ENCODE measurements at regions of chr2 and their contacts with region 1.

Region 1: DNA sequence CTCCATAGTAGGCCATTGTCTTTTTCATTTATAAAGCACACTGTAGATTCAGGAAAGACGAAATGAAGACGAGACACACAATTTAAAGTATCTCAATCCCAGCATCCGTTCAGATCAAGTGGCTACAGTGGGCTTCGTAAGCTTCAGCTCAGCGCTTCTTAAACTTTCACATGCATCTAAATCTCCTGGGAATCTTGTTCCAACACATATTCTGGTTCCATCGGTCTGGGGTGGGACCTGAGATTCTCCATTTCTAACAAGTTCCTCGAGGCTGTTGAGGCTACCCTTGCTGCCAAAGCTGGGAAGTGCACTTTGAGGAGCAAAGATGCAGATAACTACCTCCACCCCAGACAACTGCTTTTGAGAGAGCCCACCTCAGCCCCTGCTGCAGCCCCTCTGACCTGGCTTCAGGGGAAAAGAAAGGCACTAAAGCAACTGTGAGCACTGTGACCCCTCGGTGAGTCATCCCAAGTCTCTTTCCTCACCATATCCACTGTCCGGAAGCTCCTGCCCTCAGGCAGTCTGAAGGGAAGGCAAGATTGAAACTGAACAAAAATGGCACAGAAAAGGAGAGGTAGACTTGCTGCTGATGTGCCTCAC is 201.1 kb upstream of the FBXO11 start:
- DNase-seq: no peak
- H3K4me3 ChIP-seq: no peak overlapping the region
- H3K27ac ChIP-seq: peak overlapping the region in 5 of 8 donors; percentile 6 to 66 (median 53)
- H3K4me1 ChIP-seq: peaks cover 9 to 46% (median 26%) of the 10 kb centered on the region in 6 donors
- H3K27me3 ChIP-seq: no peaks in the 10 kb centered on the region
- CTCF ChIP-seq: no peak
- POLR2A ChIP-seq: no peak

Region 2: DNA sequence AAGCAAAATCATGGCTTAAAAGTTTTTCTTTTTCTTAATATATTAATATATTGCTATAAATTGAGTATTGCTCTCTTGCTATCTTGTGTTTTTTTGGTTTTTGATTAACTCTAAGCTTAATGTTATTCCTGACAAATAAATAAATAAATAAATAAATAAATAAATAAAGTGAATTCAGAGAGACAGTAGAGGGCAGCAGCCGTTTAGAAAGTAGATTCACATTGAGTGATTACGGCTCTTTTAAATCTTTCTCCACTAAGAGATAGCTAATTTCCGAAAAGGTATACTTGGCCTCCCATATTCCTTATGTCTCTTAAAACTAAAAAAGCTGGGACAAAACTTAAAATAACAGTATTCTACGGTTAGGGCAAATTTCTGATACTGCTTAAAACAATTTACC is 670.1 kb before region 1 on chr2:
- intact Hi-C with region 1: loop called (anchors 5 kb)
- DNase-seq: no peak
- H3K4me3 ChIP-seq: no peak overlapping the region
- H3K27ac ChIP-seq: no peak overlapping the region
- H3K4me1 ChIP-seq: no peaks in the 10 kb centered on the region
- H3K27me3 ChIP-seq: no peaks in the 10 kb centered on the region
- CTCF ChIP-seq: peak in 5 of 11 experiments; percentile 17 to 48 (median 28)
- POLR2A ChIP-seq: no peak

Region 3: GRCh38 chr2:48790407-48791170 is 683.2 kb after region 1 on chr2:
- intact Hi-C with region 1: no loop called
- DNase-seq: no peak
- H3K4me3 ChIP-seq: no peak overlapping the region
- H3K27ac ChIP-seq: no peak overlapping the region
- H3K4me1 ChIP-seq: no peaks in the 10 kb centered on the region
- H3K27me3 ChIP-seq: no peaks in the 10 kb centered on the region
- CTCF ChIP-seq: no peak
- POLR2A ChIP-seq: no peak

Measured in spleen (tissue), 13 donors.